ENCODE measurements at regions of chr7 and their contacts with region 1.

Region 1: DNA sequence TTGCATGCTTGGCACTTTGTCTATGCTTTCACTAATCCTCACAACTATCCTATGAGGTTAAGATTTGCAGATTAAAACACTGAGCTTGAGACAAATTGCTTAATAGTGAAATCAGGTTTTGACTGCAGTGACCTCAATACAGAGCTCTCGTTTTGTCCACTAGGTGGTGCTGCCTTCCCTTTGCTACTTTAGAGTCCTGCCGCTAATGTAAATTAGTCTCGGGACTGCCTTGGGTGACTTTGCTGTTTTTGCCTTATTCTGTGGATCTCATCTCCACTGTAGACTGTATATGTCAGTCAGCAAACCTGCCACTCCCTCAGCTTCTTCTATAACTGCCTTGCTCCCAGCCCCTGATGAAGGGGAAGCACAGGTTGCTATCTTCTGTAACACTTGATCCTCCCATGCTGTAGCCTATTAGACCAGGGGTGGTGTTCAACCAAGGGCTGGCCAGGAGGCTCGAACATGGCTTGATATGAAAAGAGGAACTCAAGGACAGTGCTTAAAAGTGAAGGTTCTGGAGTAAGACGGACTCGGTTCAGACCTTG is 26.0 kb downstream of the ASB4 start:
- DNase-seq: peak; percentile 78
- H3K4me3 Mint-ChIP-seq: no peak overlapping the region
- H3K27ac Mint-ChIP-seq: no peak overlapping the region
- H3K4me1 Mint-ChIP-seq: no peaks in the 10 kb centered on the region
- H3K27me3 Mint-ChIP-seq: peaks cover 29% of the 10 kb centered on the region
- CTCF ChIP-seq: peak; percentile 59

Region 2: GRCh38 chr7:95367644-95368043 is 144.1 kb before region 1 on chr7:
- CTCF ChIA-PET with region 1: no interaction called
- POLR2A ChIA-PET with region 1: no interaction called
- intact Hi-C with region 1: no loop called
- DNase-seq: no peak
- H3K4me3 Mint-ChIP-seq: no peak overlapping the region
- H3K27ac Mint-ChIP-seq: no peak overlapping the region
- H3K4me1 Mint-ChIP-seq: peaks cover 12% of the 10 kb centered on the region
- H3K27me3 Mint-ChIP-seq: no peaks in the 10 kb centered on the region
- CTCF ChIP-seq: no peak

Region 3: DNA sequence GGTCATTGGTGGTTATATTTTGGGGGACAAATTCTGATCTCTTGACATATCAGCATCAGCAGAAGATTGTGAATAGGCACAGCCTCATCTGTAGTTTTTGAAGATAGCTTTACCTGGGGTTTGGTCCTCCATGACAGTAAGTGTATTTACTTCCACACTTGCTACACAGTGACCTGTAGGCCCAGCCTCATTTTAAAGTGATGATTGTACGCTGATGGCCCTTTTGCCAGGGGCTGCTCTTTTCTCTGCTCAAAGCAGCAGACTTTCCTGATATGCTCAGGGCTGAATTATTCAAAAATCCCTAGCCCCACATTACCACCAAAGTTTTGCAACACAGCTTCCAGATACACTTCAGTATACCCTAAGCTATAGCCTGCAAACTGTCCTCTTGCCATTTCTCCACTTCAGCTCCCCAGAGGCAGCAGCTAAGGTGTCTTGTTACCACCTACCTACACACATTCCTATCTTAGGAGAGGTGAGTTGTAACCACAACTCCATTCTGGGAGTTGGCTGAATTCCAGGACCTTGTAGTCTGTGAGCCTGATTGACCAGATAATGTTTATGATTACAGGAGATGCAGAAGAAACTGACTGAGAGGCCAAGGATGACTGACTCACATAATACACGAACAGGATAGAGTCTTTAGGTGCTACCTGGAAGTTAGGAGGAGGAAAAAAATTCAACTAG is 20.0 kb before region 1 on chr7:
- CTCF ChIA-PET with region 1: interaction called, 62 read pairs
- POLR2A ChIA-PET with region 1: interaction called, 5 read pairs
- intact Hi-C with region 1: no loop called
- DNase-seq: peak; percentile 96
- H3K4me3 Mint-ChIP-seq: no peak overlapping the region
- H3K27ac Mint-ChIP-seq: peak overlapping the region; percentile 23
- H3K4me1 Mint-ChIP-seq: peaks cover 24% of the 10 kb centered on the region
- H3K27me3 Mint-ChIP-seq: no peaks in the 10 kb centered on the region
- CTCF ChIP-seq: no peak

Region 4: DNA sequence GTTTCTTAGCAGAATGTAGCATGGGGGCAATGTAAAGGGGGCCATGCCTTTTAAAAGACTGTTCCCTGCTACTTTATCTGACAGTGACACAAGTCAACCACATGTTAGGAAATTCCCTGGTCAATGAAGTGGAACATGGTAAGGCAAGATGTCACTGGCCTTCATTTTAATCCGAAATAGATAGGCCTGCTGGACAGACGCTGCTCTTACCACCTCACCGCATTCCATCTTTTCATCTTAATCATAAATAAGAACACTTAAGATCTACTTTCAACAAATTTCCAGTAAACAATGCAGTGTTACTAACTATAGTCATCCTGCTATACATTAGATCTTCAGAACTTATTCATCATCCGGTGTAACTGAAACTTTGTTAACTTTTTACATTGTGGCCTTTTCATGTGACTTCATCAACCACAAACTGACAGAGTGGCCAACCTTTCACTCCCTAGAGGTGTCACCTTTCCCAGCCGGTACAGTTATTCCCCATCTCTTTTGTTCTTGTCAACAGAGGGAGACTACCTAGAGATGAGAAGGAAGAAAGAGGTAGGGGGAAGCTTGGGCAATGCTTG is 10.4 kb before region 1 on chr7:
- CTCF ChIA-PET with region 1: interaction called, 18 read pairs
- POLR2A ChIA-PET with region 1: no interaction called
- intact Hi-C with region 1: no loop called
- DNase-seq: peak; percentile 9
- H3K4me3 Mint-ChIP-seq: no peak overlapping the region
- H3K27ac Mint-ChIP-seq: no peak overlapping the region
- H3K4me1 Mint-ChIP-seq: peaks cover 13% of the 10 kb centered on the region
- H3K27me3 Mint-ChIP-seq: no peaks in the 10 kb centered on the region
- CTCF ChIP-seq: no peak

Region 5: GRCh38 chr7:95684037-95684436 is 172.2 kb after region 1 on chr7:
- CTCF ChIA-PET with region 1: interaction called, 390 read pairs
- POLR2A ChIA-PET with region 1: interaction called, 11 read pairs
- intact Hi-C with region 1: loop called (anchors 2 kb)
- DNase-seq: peak; percentile 60
- H3K4me3 Mint-ChIP-seq: no peak overlapping the region
- H3K27ac Mint-ChIP-seq: no peak overlapping the region
- H3K4me1 Mint-ChIP-seq: peaks cover 4% of the 10 kb centered on the region
- H3K27me3 Mint-ChIP-seq: no peaks in the 10 kb centered on the region
- CTCF ChIP-seq: peak; percentile 19